PC-9 (cell line): ENCODE measurements at regions of chr16 and their contacts with region 1.

Region 1: DNA sequence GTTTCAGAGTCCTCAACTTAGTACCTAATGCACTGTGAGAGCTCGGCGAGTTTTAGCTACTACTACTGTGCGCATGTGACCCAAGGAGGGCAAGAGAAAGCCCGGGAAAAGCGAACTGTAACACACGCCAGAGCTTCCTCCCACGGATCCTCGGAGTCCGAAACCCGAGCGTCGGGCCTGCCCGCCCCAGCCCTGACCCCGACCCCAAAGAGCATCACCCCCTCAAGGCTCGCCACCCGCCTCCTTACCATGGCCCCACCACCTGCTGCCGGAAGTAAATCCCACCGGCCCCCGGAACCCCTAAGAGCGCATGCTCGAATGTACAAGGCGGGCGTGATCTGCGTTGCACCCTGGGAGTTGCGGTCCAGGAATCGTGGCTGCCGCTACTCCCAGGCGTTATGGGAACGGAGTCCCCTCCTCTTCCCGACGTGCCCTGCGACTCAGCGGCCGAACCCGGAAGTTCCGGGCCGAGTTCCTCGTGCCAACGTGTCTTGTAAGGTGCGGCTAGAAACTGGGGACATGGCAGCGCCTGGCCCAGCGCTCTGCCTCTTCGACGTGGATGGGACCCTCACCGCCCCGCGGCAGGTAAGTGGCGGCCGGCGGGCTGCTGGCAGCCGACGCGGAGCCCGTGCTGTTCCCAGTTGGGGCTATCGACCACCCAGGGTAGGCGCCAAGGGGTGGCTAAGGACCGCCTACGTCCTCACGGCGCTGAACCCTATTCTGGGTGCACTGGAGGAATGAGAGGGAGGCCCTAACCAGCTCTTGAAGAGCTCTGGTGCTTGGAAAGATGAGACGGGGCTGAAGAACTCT is at the starts of genes PMM2 and TMEM186:
- DNase-seq: peak; percentile 95 to 96
- H3K4me3 ChIP-seq: peak within 1 kb of the TSS; percentile 96
- H3K27ac ChIP-seq: peak within 1 kb of the TSS; percentile 75
- H3K4me1 ChIP-seq: peaks cover 22% of the 10 kb centered on the region
- H3K27me3 ChIP-seq: no peaks in the 10 kb centered on the region
- CTCF ChIP-seq: no peak
- total RNA-seq, gene PMM2: 40.0 and 54.4 TPM in 2 replicates
- total RNA-seq, gene TMEM186: 20.5 and 27.0 TPM in 2 replicates

Region 2: DNA sequence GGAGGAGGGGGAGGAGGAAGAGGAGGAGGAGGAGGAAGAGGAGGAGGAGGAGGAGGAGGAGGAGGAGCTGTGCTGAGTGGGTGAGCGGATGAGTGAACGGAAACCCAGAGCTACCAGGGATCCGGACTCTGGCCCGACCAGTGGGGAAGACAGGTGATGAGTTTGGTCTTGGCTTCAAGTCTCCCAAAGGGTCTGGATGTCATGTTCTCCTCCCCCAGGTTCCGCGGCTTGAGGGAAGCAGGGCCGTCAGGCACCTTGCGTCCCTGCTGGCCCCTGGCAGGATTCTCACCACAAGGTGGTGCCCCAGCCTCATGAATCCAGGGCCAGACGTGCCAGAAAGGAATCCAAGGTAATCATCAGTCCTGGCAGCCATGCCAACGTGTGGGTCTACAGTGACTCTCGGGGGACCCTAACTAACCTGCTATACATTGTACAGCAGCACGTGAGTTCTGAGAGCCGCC is 136.7 kb before region 1 on chr16:
- CTCF ChIA-PET with region 1: no interaction called
- POLR2A ChIA-PET with region 1: no interaction called
- intact Hi-C with region 1: loop called (anchors 1 kb)
- DNase-seq: peak; percentile 46 to 55
- H3K4me3 ChIP-seq: no peak overlapping the region
- H3K27ac ChIP-seq: no peak overlapping the region
- H3K4me1 ChIP-seq: no peaks in the 10 kb centered on the region
- H3K27me3 ChIP-seq: no peaks in the 10 kb centered on the region
- CTCF ChIP-seq: peak; percentile 69

Region 3: GRCh38 chr16:8776129-8776584 is 21.4 kb before region 1 on chr16:
- CTCF ChIA-PET with region 1: no interaction called
- POLR2A ChIA-PET with region 1: no interaction called
- intact Hi-C with region 1: loop called (anchors 1 kb)
- DNase-seq: peak; percentile 91 to 96
- H3K4me3 ChIP-seq: no peak overlapping the region
- H3K27ac ChIP-seq: no peak overlapping the region
- H3K4me1 ChIP-seq: peaks cover 9% of the 10 kb centered on the region
- H3K27me3 ChIP-seq: no peaks in the 10 kb centered on the region
- CTCF ChIP-seq: no peak

Region 4: DNA sequence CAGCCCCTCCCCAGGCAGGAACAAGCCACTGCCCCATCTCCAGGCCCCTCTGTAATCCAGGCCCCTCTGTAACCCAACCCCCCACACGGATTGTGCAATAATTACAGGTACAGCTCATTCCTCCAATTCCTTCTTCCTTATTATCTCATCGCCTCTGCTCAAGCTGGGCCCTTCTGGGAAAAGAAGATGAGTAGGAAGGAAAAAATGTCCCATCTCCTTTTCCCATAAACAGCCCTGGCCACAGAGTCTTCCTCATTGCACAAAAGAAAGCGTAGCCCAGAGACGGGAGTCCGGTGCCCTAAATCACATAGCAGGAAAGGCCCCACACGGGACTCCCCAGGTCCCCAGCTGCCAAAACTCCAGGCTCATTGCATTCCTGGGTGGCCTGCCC is 80.9 kb after region 1 on chr16:
- CTCF ChIA-PET with region 1: no interaction called
- POLR2A ChIA-PET with region 1: no interaction called
- intact Hi-C with region 1: loop called (anchors 2 kb)
- DNase-seq: peak; percentile 70 to 81
- H3K4me3 ChIP-seq: no peak overlapping the region; the same call in 1 of the 2 replicates
- H3K27ac ChIP-seq: peak overlapping the region; percentile 76
- H3K4me1 ChIP-seq: peaks cover 23% of the 10 kb centered on the region
- H3K27me3 ChIP-seq: no peaks in the 10 kb centered on the region
- CTCF ChIP-seq: no peak

Region 5: GRCh38 chr16:8899709-8900317 is 102.2 kb after region 1 on chr16:
- CTCF ChIA-PET with region 1: interaction called, 10 read pairs
- POLR2A ChIA-PET with region 1: no interaction called
- intact Hi-C with region 1: no loop called
- DNase-seq: no peak
- H3K4me3 ChIP-seq: no peak overlapping the region
- H3K27ac ChIP-seq: no peak overlapping the region
- H3K4me1 ChIP-seq: no peaks in the 10 kb centered on the region
- H3K27me3 ChIP-seq: no peaks in the 10 kb centered on the region
- CTCF ChIP-seq: no peak

Region 6: GRCh38 chr16:9134739-9135138 is 337.2 kb after region 1 on chr16:
- CTCF ChIA-PET with region 1: no interaction called
- POLR2A ChIA-PET with region 1: no interaction called
- intact Hi-C with region 1: loop called (anchors 2 kb)
- DNase-seq: peak; percentile 53 to 78
- H3K4me3 ChIP-seq: no peak overlapping the region
- H3K27ac ChIP-seq: no peak overlapping the region
- H3K4me1 ChIP-seq: no peaks in the 10 kb centered on the region
- H3K27me3 ChIP-seq: no peaks in the 10 kb centered on the region
- CTCF ChIP-seq: peak; percentile 78